Head of caudate nucleus (tissue), 42 donors: ENCODE measurements at regions of chr7 and their contacts with region 1.

Region 1: DNA sequence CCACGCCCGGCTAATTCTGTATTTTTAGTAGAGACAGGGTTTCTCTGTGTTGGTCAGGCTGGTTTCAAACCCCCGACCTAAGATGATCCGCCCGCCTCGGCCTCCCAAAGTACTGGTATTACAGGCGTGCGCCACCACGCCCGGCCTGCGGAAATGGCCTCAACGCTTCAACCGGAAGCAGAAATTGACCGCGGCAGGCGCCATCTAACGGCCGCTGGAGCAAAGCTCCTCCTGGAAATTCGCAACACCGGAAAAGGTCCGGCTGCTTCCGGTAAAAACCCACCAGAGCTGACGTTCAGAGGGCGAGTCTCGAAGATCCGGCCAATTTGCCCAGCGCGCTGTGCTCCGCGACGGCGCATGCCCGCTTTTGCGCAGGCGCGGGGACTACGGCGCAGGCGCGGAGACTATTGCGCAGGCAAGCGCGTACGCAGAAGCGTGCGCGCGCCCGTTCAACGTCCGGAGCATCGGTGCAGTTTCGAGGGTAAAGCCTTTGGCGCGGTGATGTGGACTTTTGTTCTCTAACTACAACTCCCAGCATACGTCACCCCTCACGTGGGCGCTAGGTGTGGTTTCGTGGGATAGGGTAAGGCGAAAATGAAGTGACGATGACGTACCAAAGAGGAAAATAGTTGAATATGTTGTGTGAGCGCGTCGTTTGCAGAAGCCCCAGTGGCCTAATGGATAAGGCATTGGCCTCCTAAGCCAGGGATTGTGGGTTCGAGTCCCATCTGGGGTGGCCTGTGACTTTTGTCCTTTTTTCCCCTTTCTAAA is 915 bp upstream of the FMC1 start:
- DNase-seq: peak; percentile 91 to 99 (median 98)

Region 2: DNA sequence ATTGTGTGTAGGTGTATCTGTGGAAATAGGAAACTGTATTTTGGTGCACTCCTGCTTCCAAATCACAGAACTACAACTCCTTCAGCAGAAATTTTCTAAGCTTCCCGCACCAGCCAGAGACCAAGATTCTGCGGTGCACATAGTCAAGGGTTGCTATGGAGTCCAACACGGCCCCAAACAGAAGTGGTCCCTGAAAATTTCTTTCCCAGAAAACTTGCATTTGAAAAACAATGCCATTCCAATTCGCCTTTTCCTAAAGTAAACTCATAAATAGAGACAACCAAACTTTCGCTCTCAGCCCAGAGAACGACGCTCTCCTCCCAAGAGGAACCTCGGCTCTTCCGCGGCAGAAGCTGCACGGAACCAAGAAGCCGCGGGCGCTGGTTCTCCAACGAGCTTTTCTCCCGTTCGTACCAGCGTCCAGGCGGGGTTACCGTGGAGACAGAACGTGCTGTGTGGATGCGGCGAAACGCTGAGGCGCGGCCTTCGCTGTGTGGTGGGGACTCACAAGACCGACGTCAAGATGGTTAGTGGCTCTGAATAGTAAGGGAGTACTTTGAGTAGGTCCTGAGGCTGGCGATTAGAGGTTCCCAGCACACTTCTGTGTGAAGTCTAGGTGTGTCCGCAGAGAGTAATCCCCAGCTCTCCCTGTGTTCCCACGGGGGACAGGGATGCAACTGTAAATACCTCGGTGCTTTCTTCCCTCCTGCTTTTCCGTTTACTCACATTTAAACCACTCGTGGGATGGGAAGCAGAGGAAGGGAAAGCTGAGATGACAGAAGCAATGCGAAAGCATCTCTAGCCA is 206.7 kb before region 1 on chr7:
- intact Hi-C with region 1: loop called (anchors 2 kb)
- DNase-seq: peak; percentile 77 to 96 (median 90)

Region 3: GRCh38 chr7:139203992-139204391 is 136.2 kb before region 1 on chr7:
- intact Hi-C with region 1: no loop called
- DNase-seq: no peak

Region 4: GRCh38 chr7:139230774-139231512 is 109.3 kb before region 1 on chr7 and contains the start of gene UBN2:
- intact Hi-C with region 1: loop called (anchors 5 kb)
- DNase-seq: peak; percentile 90 to 99 (median 98)

Region 5: DNA sequence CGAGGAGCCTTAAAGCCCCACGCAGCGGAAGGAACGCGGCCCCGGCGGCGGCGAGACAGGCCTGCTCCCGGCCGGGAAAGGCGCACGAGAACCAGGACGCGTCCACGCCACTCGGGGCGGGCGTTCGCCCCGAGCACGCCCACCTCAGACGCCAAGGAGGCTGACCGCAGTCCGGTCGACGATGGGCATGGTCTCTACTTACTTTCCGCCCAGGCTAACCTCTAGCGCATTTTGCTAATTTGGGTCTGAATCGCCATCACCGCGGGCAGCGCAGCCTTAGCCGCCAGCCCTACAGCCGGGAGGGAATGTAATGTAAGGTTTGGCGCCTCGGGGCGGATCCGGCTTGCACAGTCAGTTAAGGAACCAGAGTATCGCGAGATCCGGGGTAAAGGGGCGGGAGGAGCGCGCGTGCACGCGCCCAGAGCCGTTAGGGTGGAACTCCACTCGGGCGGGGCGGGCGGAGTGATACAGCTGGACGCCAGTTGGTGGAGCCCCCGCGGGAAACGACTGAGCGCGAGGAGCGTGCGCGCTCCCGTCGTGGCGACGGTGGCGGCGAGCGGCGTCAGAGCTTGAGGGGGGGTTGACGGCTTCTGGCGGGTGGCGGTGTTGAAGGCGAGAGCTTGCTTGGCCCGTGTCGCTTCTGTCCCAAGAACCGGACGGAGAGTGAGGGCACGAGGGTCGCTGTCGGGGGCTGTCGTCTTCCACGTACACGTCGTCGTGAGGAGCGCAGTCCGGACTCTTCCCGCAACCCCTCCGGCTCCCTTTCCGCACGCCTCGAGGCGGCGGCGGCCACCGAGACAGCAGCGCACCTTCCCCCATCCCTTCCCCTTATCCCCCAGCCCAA is 19.4 kb after region 1 on chr7 and contains the start of gene LUC7L2:
- intact Hi-C with region 1: loop called (anchors 1 kb)
- DNase-seq: peak; percentile 99 to 100 (median 100)

Region 6: DNA sequence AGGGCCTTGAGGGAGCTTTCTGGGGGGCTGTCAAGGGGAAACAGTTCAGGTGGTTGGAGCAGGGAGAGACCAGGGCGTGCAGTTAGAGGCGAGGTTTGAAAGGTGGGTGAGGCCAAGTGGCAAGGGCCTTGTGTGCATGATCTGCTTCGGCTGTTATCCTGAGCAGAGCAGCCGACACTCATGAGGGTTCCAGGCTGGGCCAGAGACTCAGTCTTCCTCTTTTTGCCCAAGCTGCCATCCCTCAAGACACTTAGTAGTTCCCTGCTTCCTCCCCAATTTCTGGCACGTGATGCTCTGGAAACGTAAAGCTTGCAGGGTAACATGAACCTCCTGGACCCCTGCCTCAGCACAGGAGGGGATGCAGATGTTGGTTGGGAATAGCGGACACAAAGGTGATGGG is 99.2 kb after region 1 on chr7:
- intact Hi-C with region 1: loop called (anchors 5 kb)
- DNase-seq: no peak